Gastrocnemius medialis (tissue), 4 donors: ENCODE measurements at regions of chr15 and their contacts with region 1.

Region 1: DNA sequence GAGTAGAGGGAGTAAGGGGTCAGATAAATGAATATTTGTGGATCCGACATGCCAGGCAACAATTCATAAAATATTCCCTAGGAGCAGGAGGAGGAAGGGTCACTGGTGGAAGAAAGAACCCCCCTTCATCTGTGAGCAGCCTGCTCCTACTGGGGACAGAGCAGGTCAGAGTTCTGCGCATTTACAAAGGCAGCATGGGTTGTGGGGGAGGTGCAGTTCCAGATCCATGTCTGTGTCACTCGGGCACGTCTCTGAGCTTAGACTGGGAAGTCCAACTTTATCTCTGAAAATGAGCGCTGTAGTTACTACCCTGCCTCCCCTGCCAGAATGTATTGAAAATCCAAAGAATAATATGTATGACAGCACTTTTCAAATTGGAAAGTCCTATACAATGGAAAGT is 115.2 kb downstream of the GABRG3 start:
- DNase-seq: no peak
- ATAC-seq: no peak
- H3K4me3 ChIP-seq: no peak overlapping the region
- H3K27ac ChIP-seq: no peak overlapping the region
- H3K4me1 ChIP-seq: no peaks in the 10 kb centered on the region
- H3K27me3 ChIP-seq: no peaks in the 10 kb centered on the region
- CTCF ChIP-seq: no peak
- POLR2A ChIP-seq: no peak

Region 2: DNA sequence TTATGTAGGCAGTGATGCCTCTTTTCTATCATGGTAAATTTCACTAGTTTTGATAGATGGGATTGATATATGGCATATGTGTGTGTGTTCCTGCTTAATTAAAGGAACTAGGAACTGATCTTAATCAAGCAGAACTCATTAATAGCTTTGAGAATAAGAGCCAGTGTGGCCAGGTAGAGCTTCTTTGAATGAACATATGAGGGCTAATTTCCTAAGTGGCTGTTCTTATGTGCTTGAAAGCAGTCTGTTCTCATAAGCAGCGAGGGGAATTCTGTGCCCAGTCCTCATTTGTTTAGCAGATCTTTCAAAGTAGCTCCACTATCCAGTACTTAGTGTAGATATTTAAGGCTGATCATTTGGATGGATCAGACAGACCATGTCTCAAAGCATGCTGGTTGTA is 49.0 kb after region 1 on chr15:
- in situ Hi-C with region 1: loop called in 1 of 4 experiments (anchors 10 kb)
- intact Hi-C with region 1: no loop called
- DNase-seq: no peak
- ATAC-seq: no peak
- H3K4me3 ChIP-seq: no peak overlapping the region
- H3K27ac ChIP-seq: no peak overlapping the region
- H3K4me1 ChIP-seq: no peaks in the 10 kb centered on the region
- H3K27me3 ChIP-seq: no peaks in the 10 kb centered on the region
- CTCF ChIP-seq: no peak
- POLR2A ChIP-seq: no peak